Right ventricle myocardium superior (tissue), 1 donor: ENCODE measurements at regions of chr11 and their contacts with region 1.

Region 1: GRCh38 chr11:111819829-111820237 is 51.5 kb downstream of the ALG9 start:
- DNase-seq: no peak
- ATAC-seq: peak; percentile 25

Region 2: DNA sequence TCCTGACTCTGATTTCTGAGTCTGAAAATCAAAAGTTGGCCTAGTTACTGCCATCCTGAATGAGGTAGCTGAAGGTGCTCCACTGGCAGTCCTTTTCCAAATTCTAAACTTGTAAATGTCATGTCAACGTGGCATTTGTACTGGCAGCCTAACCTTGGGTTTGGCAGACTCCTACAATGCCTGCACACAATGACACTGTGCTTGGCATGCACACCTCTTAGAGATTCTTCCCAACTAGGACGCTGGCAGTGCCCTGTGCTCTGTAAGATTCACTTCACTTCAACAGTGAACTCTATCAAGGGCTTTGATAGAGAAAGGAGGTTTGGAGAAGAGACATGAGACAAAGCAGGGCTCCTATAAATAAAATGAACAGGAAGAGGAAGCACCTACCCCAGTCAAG is 31.8 kb before region 1 on chr11:
- intact Hi-C with region 1: loop called (anchors 5 kb)
- DNase-seq: peak; percentile 69
- ATAC-seq: peak; percentile 91

Region 3: DNA sequence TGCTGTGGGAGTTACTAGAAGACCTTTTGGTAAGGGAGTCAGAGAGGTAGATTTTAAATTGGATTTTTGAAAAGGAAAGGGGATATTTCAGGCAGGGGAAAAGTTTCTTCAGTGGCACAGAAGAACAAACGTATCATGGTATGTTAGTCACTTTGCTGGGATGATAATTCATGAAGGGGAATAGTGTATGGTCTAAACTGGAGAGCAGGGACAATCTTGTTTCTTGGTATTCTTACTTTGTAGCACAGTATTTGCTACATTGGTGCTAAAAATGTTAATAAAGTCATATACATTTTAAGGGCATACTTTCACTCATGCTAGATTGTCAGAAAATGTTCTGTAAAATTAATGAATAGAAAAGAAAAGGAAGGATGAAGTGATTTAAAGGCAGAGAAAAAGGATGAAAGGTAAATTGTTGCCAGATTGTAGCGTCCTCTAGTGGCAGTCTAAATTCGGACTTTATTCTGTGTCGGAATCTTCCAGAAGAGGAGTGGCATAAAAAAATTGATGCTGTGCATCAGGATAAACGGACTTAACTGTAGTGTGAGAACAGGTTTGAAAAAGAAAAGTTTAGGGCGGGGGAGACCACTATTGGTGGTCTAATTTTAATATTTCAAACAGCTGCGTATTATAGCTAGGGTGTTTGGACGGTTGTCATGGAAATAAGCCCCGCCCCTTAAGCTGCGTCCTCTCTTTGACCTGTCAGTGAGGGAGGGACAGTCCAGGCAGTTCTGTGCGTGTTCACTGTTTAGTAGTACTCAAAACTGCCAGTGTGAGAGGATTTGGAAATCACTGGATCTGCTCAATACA is 355.2 kb after region 1 on chr11 and contains the start of gene BCO2:
- intact Hi-C with region 1: no loop called
- DNase-seq: peak; percentile 88
- ATAC-seq: peak; percentile 94
- total RNA-seq, gene BCO2: 151 TPM